ENCODE measurements at regions of chr16 and their contacts with region 1.

Region 1: GRCh38 chr16:1221628-1222552 is 3.2 kb downstream of the TPSG1 start:
- DNase-seq: no peak
- ATAC-seq: no peak
- H3K4me3 ChIP-seq: no peak overlapping the region
- H3K27ac ChIP-seq: no peak overlapping the region
- H3K4me1 ChIP-seq: no peaks in the 10 kb centered on the region
- H3K27me3 ChIP-seq: no peaks in the 10 kb centered on the region; the same call in 1 of the 2 replicates
- CTCF ChIP-seq: no peak
- POLR2A ChIP-seq: no peak
- RAD21 ChIP-seq: no peak

Region 2: GRCh38 chr16:807347-808084 is 414.4 kb before region 1 on chr16:
- CTCF ChIA-PET with region 1: no interaction called
- POLR2A ChIA-PET with region 1: no interaction called
- dilution Hi-C with region 1: no loop called
- in situ Hi-C with region 1: loop called (anchors 25 kb)
- intact Hi-C with region 1: no loop called
- DNase-seq: peak; percentile 86
- ATAC-seq: peak; percentile 98
- H3K4me3 ChIP-seq: peak overlapping the region; percentile 84
- H3K27ac ChIP-seq: peak overlapping the region; percentile 54
- H3K4me1 ChIP-seq: peaks cover 3% of the 10 kb centered on the region; the same call in 1 of the 2 replicates
- H3K27me3 ChIP-seq: no peaks in the 10 kb centered on the region
- CTCF ChIP-seq: no peak
- POLR2A ChIP-seq: peak; percentile 78; the same call in 1 of the 2 replicates
- RAD21 ChIP-seq: no peak

Region 3: DNA sequence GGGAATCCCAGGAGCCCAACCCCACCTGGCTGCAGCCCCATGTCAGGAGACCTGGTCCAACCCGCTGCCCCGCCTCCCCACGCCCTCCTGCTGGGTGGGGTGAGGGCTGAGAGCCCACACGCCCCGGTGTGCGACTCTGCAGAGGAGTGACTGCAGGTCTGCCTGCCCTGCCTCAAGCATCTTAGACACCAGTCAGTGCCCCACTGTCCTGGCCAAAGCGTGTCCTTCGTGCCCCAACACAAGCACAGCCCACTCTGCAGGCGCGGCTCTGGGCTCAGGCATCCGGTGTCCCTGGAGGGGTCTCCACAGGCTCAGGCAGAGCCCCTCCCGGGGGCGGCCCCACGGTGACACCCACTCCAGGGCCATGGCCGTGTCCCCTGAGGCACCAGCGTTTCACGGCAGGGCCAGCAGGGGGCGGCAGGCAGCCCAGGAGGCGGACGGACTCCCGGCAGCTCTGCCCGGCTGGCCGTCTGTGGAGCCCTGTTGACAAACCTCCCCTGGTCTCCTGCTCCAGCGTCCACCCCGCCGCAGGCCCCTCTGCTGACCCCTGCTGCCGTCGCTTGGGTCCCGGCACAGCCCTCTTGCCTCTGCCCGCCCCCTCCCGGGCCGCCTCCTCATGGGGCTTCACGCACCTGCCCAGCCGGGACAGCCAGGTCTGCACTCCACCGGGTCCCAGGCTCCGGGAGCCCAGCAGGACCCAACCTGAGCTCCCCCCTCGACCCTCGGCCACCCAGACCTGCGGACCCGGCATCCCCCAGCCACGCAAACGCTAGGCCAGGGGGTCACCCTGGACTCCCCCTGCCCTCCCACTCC is 79.0 kb after region 1 on chr16:
- CTCF ChIA-PET with region 1: no interaction called
- POLR2A ChIA-PET with region 1: no interaction called
- dilution Hi-C with region 1: no loop called
- in situ Hi-C with region 1: no loop called
- intact Hi-C with region 1: no loop called
- DNase-seq: peak; percentile 22
- ATAC-seq: peak; percentile 97
- H3K4me3 ChIP-seq: no peak overlapping the region
- H3K27ac ChIP-seq: no peak overlapping the region
- H3K4me1 ChIP-seq: peaks cover 5% of the 10 kb centered on the region; the same call in 1 of the 2 replicates
- H3K27me3 ChIP-seq: peaks cover 11% of the 10 kb centered on the region
- CTCF ChIP-seq: peak; percentile 76
- POLR2A ChIP-seq: no peak
- RAD21 ChIP-seq: peak; percentile 50

Region 4: GRCh38 chr16:1579201-1579600 is 357.3 kb after region 1 on chr16:
- CTCF ChIA-PET with region 1: no interaction called
- POLR2A ChIA-PET with region 1: no interaction called
- dilution Hi-C with region 1: no loop called
- in situ Hi-C with region 1: no loop called
- intact Hi-C with region 1: no loop called
- DNase-seq: no peak
- ATAC-seq: no peak
- H3K4me3 ChIP-seq: no peak overlapping the region
- H3K27ac ChIP-seq: no peak overlapping the region
- H3K4me1 ChIP-seq: no peaks in the 10 kb centered on the region
- H3K27me3 ChIP-seq: no peaks in the 10 kb centered on the region
- CTCF ChIP-seq: no peak
- POLR2A ChIP-seq: no peak
- RAD21 ChIP-seq: no peak

Measured in IMR-90 (cell line).